Endothelial cell of umbilical vein (primary cell): ENCODE measurements at regions of chr7 and their contacts with region 1.

Region 1: GRCh38 chr7:37149051-37149772 is 299.5 kb downstream of the ELMO1 start:
- DNase-seq: no peak
- H3K4me3 ChIP-seq: no peak overlapping the region
- H3K27ac ChIP-seq: no peak overlapping the region
- H3K4me1 ChIP-seq: no peaks in the 10 kb centered on the region
- H3K27me3 ChIP-seq: no peaks in the 10 kb centered on the region
- CTCF ChIP-seq: no peak
- POLR2A ChIP-seq: no peak

Region 2: DNA sequence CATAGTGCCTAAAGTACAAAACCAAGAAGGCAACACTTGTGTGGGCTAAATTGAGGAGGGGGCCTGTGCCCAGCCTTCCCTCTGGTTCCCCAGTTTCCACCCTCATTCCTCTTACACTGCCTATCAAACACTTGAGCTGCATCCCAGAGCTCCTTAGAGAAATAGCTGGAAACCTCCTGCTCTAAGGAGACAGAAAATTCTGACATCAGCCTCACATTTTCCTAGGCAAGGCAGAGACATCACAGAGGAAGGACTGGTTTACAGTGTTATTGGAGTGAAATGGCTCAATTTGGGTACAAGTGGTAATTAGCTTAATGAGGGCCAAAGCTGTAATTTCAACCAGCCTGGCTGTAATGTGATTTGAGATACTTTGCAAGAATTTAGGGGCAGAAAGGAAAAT is 232.6 kb before region 1 on chr7:
- CTCF ChIA-PET with region 1: no interaction called
- POLR2A ChIA-PET with region 1: no interaction called
- dilution Hi-C with region 1: no loop called
- intact Hi-C with region 1: loop called (anchors 5 kb)
- DNase-seq: no peak
- H3K4me3 ChIP-seq: no peak overlapping the region
- H3K27ac ChIP-seq: no peak overlapping the region
- H3K4me1 ChIP-seq: no peaks in the 10 kb centered on the region
- H3K27me3 ChIP-seq: no peaks in the 10 kb centered on the region
- CTCF ChIP-seq: no peak
- POLR2A ChIP-seq: no peak

Region 3: GRCh38 chr7:37081436-37081835 is 67.8 kb before region 1 on chr7:
- CTCF ChIA-PET with region 1: no interaction called
- POLR2A ChIA-PET with region 1: no interaction called
- dilution Hi-C with region 1: no loop called
- intact Hi-C with region 1: no loop called
- DNase-seq: peak; percentile 54
- H3K4me3 ChIP-seq: no peak overlapping the region
- H3K27ac ChIP-seq: no peak overlapping the region
- H3K4me1 ChIP-seq: no peaks in the 10 kb centered on the region
- H3K27me3 ChIP-seq: no peaks in the 10 kb centered on the region
- CTCF ChIP-seq: no peak
- POLR2A ChIP-seq: no peak